Dorsolateral prefrontal cortex (tissue), 120 donors: ENCODE measurements at regions of chr4 and their contacts with region 1.

Region 1: DNA sequence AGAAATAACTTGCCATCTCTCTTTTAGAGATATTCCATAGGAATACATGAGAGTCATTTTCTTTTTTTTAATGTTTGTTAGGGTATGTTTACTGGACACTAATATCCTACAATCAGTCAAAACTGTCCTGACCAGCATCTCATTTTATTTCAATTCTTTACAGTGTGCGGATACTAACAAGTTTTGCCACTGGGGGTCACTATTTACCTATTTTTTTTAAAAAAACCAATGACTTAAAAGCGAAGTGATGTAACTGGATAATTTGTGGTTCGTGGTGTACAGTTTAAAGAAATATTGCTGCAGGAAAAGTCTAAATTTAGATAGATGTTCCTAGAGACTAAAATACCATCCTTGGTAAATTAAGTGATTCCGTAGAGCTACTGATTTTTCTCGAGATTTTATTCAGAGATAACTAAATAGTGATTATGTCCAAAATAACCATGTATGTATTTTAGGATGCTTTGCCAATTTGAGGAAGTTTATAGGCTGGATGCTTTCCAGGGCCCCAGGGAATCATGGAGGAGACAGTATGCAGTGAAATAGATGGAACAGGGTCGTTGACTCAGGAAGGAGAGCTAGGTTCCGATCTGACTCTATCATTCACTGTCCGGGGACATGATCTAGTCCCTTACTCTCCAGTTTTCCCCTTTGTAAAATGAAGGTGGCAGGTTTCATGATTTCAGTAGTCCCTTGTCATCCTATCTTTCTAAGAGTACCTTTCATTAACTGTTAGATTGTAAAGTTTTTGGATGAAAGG is 34.0 kb upstream of the GNPDA2 start:
- DNase-seq: peak in 1 of 10 donors; percentile 12
- H3K4me3 ChIP-seq: peak overlapping the region in 45 of 59 donors; percentile 3 to 55 (median 27)
- H3K27ac ChIP-seq: no peak overlapping the region
- H3K27me3 ChIP-seq: no peaks in the 10 kb centered on the region
- CTCF ChIP-seq: peak; percentile 37 to 83 (median 68)

Region 2: DNA sequence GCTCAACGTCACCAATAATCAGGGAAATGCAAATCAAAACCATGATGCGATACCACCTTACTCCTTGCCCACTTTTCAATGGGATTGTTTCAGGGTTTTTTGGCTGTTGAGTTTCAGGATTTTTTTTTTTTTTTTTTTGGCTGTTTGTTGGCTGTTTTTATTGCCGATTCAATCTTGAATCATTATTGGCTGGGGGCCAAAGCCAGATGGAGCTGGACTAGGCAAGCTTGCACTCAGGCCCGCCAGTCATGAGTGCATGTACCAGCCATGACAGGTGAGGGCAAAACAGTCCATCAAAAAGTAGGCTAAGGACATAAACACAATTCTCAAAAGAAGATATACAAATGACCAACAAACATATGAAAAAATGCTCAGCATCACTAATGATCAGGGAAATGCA is 122.2 kb before region 1 on chr4:
- intact Hi-C with region 1: no loop called
- DNase-seq: peak in 1 of 10 donors; percentile 38
- H3K4me3 ChIP-seq: no peak overlapping the region
- H3K27ac ChIP-seq: no peak overlapping the region
- H3K27me3 ChIP-seq: no peaks in the 10 kb centered on the region
- CTCF ChIP-seq: no peak

Region 3: DNA sequence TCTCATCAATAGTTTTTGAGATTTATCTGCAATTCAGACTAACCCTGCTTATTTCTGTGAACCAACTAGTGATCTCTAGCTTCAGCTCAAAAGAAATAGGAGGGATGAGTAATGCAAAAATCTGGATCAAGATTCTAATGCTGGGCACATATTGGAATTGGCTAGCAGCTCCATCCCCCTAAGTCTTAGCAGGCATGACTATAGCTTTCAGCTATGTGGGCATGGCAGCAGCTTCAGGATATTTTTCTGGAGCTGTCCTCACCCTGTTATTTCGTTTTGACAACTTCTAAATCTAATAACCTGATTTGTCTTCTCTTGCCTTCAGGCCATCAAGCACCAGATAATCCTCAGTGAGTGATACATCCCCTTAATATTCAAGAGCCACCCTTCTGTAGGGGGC is 16.8 kb after region 1 on chr4:
- intact Hi-C with region 1: no loop called
- DNase-seq: no peak
- H3K4me3 ChIP-seq: no peak overlapping the region
- H3K27ac ChIP-seq: no peak overlapping the region
- H3K27me3 ChIP-seq: no peaks in the 10 kb centered on the region
- CTCF ChIP-seq: no peak

Region 4: GRCh38 chr4:46270986-46271596 is 1510.8 kb after region 1 on chr4:
- intact Hi-C with region 1: loop called in 1 of 2 experiments (anchors 10 kb)
- DNase-seq: no peak
- H3K4me3 ChIP-seq: no peak overlapping the region
- H3K27ac ChIP-seq: no peak overlapping the region
- H3K27me3 ChIP-seq: no peaks in the 10 kb centered on the region
- CTCF ChIP-seq: peak in 55 of 56 donors; percentile 34 to 68 (median 57)